Activated T-helper 2 cell treated with anti-CD3 and anti-CD28 coated beads, Interferon-gamma antibody, Interleukin-2, Interleukin-4, amounts not matched to agents 10 μg/mL and 5 μg/mL and 100 μg/mL, durations not matched to agents 14 hours and 24 hours and 36 hours (primary cell): ENCODE measurements at regions of chr10 and their contacts with region 1.

Region 1: GRCh38 chr10:12042797-12043651 is at the start of gene UPF2:
- DNase-seq: peak; percentile 95
- H3K4me3 Mint-ChIP-seq: peak within 1 kb of the TSS; percentile 99
- H3K27ac Mint-ChIP-seq: peak within 1 kb of the TSS; percentile 96
- H3K4me1 Mint-ChIP-seq: peaks cover 23% of the 10 kb centered on the region
- H3K27me3 Mint-ChIP-seq: no peaks in the 10 kb centered on the region
- total RNA-seq, gene UPF2: 41.0 and 41.4 TPM in 2 replicates

Region 2: DNA sequence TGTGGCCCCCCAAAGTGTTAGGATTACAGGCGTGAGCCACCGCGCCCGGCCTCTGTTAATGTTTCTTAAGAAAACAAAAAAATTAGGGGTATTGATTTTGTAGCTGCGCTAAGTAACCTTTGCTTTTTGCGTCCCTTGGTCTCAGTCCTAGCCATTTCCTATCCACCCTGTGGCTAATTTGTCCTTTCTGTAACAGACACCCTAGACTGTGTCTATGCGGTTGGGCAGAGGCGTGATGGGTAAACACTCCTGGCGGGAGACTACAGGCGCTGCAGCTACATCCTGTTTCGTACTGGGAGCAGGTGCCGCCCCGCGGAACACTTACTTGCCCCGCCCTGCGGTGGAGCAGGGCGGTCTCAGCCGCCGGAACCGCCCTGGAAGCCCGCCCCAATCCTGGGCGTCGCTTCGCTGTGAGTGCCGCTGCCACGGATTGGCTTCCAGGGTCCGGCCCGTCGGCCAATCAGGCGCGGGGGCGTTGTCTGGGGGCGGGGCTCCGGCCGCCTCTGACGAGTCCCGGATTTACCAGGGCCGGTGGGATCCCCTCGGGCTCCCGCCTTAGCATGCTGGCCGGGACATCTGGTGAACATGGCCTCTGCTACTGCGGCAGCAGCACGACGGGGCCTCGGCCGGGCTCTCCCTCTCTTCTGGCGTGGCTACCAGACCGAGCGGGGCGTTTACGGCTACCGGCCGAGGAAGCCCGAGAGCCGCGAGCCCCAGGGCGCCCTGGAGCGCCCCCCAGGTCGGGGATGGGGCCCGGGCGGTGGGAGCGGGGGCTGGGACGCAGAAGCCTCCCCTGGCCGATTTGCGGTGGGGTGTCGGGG is 25.6 kb after region 1 on chr10 and contains the start of gene DHTKD1:
- intact Hi-C with region 1: loop called (anchors 1 kb)
- DNase-seq: peak; percentile 99
- H3K4me3 Mint-ChIP-seq: peak within 1 kb of the TSS; percentile 77
- H3K27ac Mint-ChIP-seq: peak within 1 kb of the TSS; percentile 86
- H3K4me1 Mint-ChIP-seq: peaks cover 16% of the 10 kb centered on the region
- H3K27me3 Mint-ChIP-seq: peaks cover 2% of the 10 kb centered on the region
- total RNA-seq, gene DHTKD1: 20.6 and 21.1 TPM in 2 replicates